ENCODE measurements at regions of chr14 and their contacts with region 1.

Region 1: DNA sequence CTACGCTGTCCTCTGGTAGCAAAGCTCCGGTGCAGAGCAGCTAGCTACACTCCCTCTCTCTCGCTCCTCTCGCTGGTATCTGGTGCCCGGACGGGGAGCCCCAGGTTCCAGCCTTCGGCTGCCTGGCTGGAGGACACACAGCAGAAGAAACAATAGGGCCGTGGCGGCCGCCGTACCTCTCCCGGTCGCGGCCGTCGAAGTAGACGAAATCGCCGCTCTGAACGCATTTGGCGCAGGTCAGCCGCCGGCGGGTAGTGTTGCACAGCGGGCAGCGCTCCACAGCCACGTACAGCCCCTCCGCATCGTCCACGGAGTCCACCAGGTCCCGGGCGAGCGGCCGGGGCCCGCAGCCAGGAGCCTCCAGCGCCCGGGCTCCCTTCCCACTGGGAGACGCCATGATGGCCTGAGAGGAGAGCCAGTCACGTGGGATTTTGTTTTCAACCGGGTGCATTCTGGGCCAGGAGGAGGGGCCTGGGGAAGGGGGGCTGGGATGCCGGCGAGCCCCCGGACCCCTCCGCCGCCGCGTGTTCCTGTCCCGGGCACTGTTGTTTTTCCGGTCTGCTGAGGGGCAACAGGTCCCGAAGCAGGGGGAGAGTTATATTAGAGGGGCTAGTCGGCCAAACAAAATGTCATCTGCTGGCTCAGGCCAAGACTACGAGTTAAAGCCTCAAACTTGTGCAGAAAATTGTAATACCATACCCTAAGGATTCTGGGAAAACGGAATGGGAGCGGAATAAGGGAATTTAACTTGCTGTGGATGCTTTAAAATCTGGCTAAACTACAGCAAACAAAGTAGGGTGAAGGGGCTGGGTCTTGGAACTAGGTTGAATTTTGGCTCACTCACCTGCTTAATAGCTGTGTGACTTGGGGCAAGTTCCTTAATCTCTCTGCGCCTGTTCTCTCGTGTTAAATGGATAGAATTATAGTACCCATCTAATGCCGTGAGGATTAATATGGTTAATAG is at the start of gene ATG14:
- DNase-seq: peak; percentile 76 to 88 (median 82)
- H3K4me3 ChIP-seq: peak within 1 kb of the TSS; percentile 94 to 99 (median 98)
- H3K27ac ChIP-seq: peak within 1 kb of the TSS; percentile 85 to 91
- H3K4me1 ChIP-seq: peaks cover 15 to 26% (median 20%) of the 10 kb centered on the region in 4 experiments
- H3K27me3 ChIP-seq: no peaks in the 10 kb centered on the region

Region 2: GRCh38 chr14:55430024-55430690 is 18.4 kb after region 1 on chr14:
- CTCF ChIA-PET with region 1: interaction called, 77 read pairs
- POLR2A ChIA-PET with region 1: no interaction called
- DNase-seq: peak; percentile 75 to 86 (median 83)
- H3K4me3 ChIP-seq: no peak overlapping the region
- H3K27ac ChIP-seq: no peak overlapping the region
- H3K4me1 ChIP-seq: peaks cover 0 to 12% (median 2%) of the 10 kb centered on the region in 4 experiments
- H3K27me3 ChIP-seq: peaks cover 0 to 28% (median 6%) of the 10 kb centered on the region in 5 experiments

Measured in common myeloid progenitor, CD34-positive (primary cell).